A549 (cell line): ENCODE measurements at regions of chr2 and their contacts with region 1.

Region 1: DNA sequence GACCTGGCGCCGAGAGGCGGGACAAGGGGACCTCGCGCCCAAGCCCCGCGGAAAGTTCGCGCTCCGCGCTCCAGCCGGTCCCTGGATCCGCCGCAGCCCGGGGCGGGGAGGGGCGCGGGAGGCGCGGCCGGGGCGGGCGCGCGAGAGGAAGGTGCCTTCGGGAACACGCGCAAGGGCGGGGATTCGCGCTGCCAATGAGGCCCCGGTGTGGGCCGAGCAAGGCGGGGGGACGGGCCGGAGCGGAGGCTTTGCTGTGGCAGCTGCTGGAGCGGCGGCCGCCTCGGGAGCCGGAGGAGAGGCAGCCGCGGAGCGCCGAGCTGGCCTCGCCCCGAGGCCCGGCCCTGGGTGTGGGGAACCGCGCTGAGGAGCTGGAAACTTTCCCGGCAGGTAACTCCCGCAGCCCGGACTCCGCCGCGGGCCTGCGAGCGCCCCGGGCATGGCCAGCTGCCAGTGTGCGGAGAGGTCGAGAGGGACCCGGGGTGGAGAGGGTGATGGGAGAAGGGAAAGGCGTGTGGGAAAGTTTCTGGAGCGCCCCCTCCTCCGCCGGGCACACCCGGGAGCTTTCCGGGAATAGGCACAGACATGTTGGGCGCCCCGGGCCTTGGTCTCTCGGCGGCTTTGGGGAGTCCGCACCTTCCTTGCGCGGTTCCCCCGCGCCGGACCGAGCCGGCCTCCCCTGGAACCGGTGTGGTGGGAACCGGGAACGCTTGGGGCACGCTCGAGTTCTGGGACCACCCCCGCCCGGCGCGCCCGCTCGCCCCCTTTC is at the start of gene TANC1:
- DNase-seq: peak; percentile 72 to 90
- ATAC-seq: peak; percentile 87 to 95
- H3K4me3 ChIP-seq: peak within 1 kb of the TSS; percentile 88
- H3K27ac ChIP-seq: peak within 1 kb of the TSS; percentile 75 to 92
- H3K4me1 ChIP-seq: peaks cover 20% of the 10 kb centered on the region
- CTCF ChIP-seq: 0 out of 3 replicates have a peak, but pooled peaks have one; percentile 5
- EP300 ChIP-seq: no peak
- POLR2A ChIP-seq: peak; percentile 71
- RAD21 ChIP-seq: peak in 1 of 2 experiments; percentile 27; a peak in 2 of 5 replicates
- polyA plus RNA-seq, gene TANC1: 19.5 and 21.2 TPM in 2 replicates

Region 2: GRCh38 chr2:158953926-158954763 is 14.4 kb before region 1 on chr2:
- CTCF ChIA-PET with region 1: no interaction called
- POLR2A ChIA-PET with region 1: interaction called, 19 read pairs
- DNase-seq: peak; percentile 32 to 87
- ATAC-seq: peak; percentile 90 to 98
- H3K4me3 ChIP-seq: no peak overlapping the region
- H3K27ac ChIP-seq: peak overlapping the region; percentile 63 to 70
- H3K4me1 ChIP-seq: peaks cover 18% of the 10 kb centered on the region
- CTCF ChIP-seq: no peak
- EP300 ChIP-seq: peak in 1 of 2 experiments; percentile 15; a peak in 1 of 5 replicates
- POLR2A ChIP-seq: no peak
- RAD21 ChIP-seq: no peak

Region 3: DNA sequence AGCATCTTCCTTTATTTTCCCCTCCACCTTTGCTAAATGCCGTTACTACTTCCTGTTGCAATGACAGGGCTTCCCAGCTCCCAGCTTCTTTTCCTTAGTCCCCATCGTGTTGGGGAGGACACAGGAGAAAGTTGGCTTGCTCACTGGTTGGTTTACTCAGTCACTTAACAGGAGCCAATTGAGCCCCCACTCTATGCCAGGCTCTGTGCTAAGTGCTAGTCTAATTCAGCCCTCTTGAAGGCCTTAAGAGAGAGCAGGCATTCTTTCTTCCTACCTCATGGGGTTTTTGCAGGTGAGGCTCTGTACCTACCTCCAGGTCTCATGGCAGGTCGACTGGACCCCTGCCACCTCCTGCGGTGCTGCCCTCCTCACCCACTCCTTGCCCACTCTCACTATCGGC is 19.9 kb after region 1 on chr2:
- CTCF ChIA-PET with region 1: interaction called, 15 read pairs
- POLR2A ChIA-PET with region 1: interaction called, 3 read pairs
- DNase-seq: no peak
- ATAC-seq: no peak
- H3K4me3 ChIP-seq: no peak overlapping the region
- H3K27ac ChIP-seq: peak overlapping the region in 1 of 2 experiments; percentile 67; a peak in 3 of 6 replicates
- H3K4me1 ChIP-seq: peaks cover 43% of the 10 kb centered on the region
- CTCF ChIP-seq: no peak
- EP300 ChIP-seq: no peak
- POLR2A ChIP-seq: no peak
- RAD21 ChIP-seq: no peak